CD4-positive, alpha-beta memory T cell (primary cell): ENCODE measurements at regions of chr17 and their contacts with region 1.

Region 1: GRCh38 chr17:2592971-2593820 is at the start of gene PAFAH1B1:
- DNase-seq: peak; percentile 93 to 97 (median 96)
- H3K4me3 ChIP-seq: peak within 1 kb of the TSS; percentile 78 to 91
- H3K4me3 Mint-ChIP-seq: peak within 1 kb of the TSS; percentile 91 to 100 (median 95)
- H3K27ac ChIP-seq: peak within 1 kb of the TSS; percentile 99
- H3K27ac Mint-ChIP-seq: peak within 1 kb of the TSS; percentile 90 to 97 (median 96)
- H3K4me1 ChIP-seq: peaks cover 38% of the 10 kb centered on the region
- H3K4me1 Mint-ChIP-seq: peaks cover 18 to 42% (median 31%) of the 10 kb centered on the region in 4 donors
- H3K27me3 ChIP-seq: no peaks in the 10 kb centered on the region
- H3K27me3 Mint-ChIP-seq: no peaks in the 10 kb centered on the region
- total RNA-seq, gene PAFAH1B1: 152 to 153 TPM

Region 2: GRCh38 chr17:2401426-2402221 is 191.6 kb before region 1 on chr17:
- CTCF ChIA-PET with region 1: no interaction called
- POLR2A ChIA-PET with region 1: no interaction called
- intact Hi-C with region 1: loop called (anchors 2 kb)
- DNase-seq: peak; percentile 99 to 100 (median 100)
- H3K4me3 ChIP-seq: peak overlapping the region; percentile 65 to 89
- H3K4me3 Mint-ChIP-seq: peak overlapping the region; percentile 90 to 100 (median 98)
- H3K27ac ChIP-seq: peak overlapping the region; percentile 95
- H3K27ac Mint-ChIP-seq: peak overlapping the region; percentile 99 to 100 (median 100)
- H3K4me1 ChIP-seq: peaks cover 35% of the 10 kb centered on the region
- H3K4me1 Mint-ChIP-seq: peaks cover 18 to 54% (median 33%) of the 10 kb centered on the region in 4 donors
- H3K27me3 ChIP-seq: no peaks in the 10 kb centered on the region
- H3K27me3 Mint-ChIP-seq: peaks cover 0 to 8% of the 10 kb centered on the region in 2 donors

Region 3: DNA sequence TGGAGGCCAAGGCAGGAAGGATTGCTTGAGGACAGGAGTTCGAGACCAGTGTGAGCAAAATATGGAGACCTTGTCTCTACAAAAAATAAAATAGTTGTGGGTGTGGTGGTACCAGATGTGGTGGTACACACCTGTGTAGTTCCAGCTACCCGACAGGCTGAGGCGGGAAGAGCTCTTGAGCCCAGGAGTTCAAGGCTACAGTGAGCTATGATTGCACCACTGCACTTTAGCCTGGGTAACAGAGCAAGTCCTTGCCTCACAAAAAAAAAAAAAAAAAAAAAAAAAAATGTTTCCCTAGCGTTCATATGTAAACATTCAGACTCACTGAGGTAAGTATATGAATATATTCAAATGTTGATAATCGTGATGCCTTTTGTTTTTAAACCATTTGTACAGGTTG is 78.8 kb after region 1 on chr17:
- CTCF ChIA-PET with region 1: interaction called, 35 read pairs
- POLR2A ChIA-PET with region 1: interaction called, 3 read pairs
- intact Hi-C with region 1: loop called (anchors 1 kb)
- DNase-seq: no peak
- H3K4me3 ChIP-seq: no peak overlapping the region
- H3K4me3 Mint-ChIP-seq: no peak overlapping the region
- H3K27ac ChIP-seq: no peak overlapping the region
- H3K27ac Mint-ChIP-seq: peak overlapping the region in 1 of 7 donors; percentile 48
- H3K4me1 ChIP-seq: peaks cover 3% of the 10 kb centered on the region
- H3K4me1 Mint-ChIP-seq: peaks cover 3 to 6% (median 4%) of the 10 kb centered on the region in 4 donors
- H3K27me3 ChIP-seq: no peaks in the 10 kb centered on the region
- H3K27me3 Mint-ChIP-seq: no peaks in the 10 kb centered on the region

Region 4: DNA sequence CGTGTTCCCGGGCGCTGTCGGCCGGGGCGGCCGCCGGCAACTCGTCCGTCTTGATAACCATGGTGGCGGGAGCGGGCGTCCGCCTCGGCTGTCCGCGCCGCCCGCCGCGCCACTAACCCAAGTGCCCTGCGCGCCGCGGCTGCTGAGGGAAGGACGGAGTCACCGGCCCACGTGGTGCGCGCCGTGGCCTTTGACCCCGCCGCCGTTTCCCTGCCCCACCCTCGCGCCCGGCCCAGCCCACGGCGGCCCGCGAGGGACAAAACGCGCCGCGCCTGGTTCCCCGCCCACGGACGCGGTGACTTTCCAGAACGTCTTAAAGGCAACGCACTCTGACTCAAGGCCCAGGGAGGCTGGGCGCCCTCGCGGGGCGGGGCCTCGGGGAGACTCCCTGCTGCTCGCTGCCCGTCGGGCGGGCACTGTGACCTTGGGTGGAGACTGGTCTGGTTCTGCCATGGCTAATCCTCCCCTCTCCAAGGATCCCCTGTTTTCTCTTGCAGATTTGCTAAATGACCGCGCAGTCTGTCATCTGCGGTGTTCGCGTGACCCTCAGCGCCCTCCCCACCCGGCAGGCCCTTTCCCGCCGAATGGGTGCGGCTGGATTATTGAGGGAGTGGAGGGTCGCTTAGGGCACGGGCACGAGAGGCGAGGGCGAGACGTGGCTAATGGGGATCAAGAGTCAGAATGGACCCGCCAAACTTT is 118.6 kb after region 1 on chr17 and contains the start of gene CLUH:
- CTCF ChIA-PET with region 1: no interaction called
- POLR2A ChIA-PET with region 1: interaction called, 7 read pairs
- intact Hi-C with region 1: loop called (anchors 1 kb)
- DNase-seq: peak; percentile 93 to 97 (median 95)
- H3K4me3 ChIP-seq: peak within 1 kb of the TSS; percentile 69 to 77
- H3K4me3 Mint-ChIP-seq: peak within 1 kb of the TSS; percentile 85 to 92 (median 89)
- H3K27ac ChIP-seq: peak within 1 kb of the TSS; percentile 62
- H3K27ac Mint-ChIP-seq: peak within 1 kb of the TSS; percentile 77 to 93 (median 91)
- H3K4me1 ChIP-seq: peaks cover 40% of the 10 kb centered on the region
- H3K4me1 Mint-ChIP-seq: peaks cover 23 to 42% (median 33%) of the 10 kb centered on the region in 4 donors
- H3K27me3 ChIP-seq: no peaks in the 10 kb centered on the region
- H3K27me3 Mint-ChIP-seq: no peaks in the 10 kb centered on the region
- total RNA-seq, gene CLUH: 43.5 to 44.1 TPM